ENCODE measurements at regions of chr10 and their contacts with region 1.

Region 1: GRCh38 chr10:122565728-122566206 is 5.2 kb downstream of the DMBT1 start:
- DNase-seq: peak; percentile 82
- ATAC-seq: no peak
- H3K4me3 Mint-ChIP-seq: no peak overlapping the region
- H3K27ac Mint-ChIP-seq: no peak overlapping the region
- H3K4me1 Mint-ChIP-seq: peaks cover 5% of the 10 kb centered on the region
- H3K27me3 Mint-ChIP-seq: peaks cover 41% of the 10 kb centered on the region

Region 2: GRCh38 chr10:122342293-122343134 is 223.3 kb before region 1 on chr10:
- CTCF ChIA-PET with region 1: interaction called, 23 read pairs
- POLR2A ChIA-PET with region 1: no interaction called
- DNase-seq: peak; percentile 69
- ATAC-seq: peak; percentile 64
- H3K4me3 Mint-ChIP-seq: no peak overlapping the region
- H3K27ac Mint-ChIP-seq: no peak overlapping the region
- H3K4me1 Mint-ChIP-seq: peaks cover 7% of the 10 kb centered on the region
- H3K27me3 Mint-ChIP-seq: no peaks in the 10 kb centered on the region

Region 3: GRCh38 chr10:122495406-122496340 is 70.1 kb before region 1 on chr10:
- CTCF ChIA-PET with region 1: interaction called, 15 read pairs
- POLR2A ChIA-PET with region 1: interaction called, 3 read pairs
- DNase-seq: peak; percentile 33
- ATAC-seq: no peak
- H3K4me3 Mint-ChIP-seq: no peak overlapping the region
- H3K27ac Mint-ChIP-seq: no peak overlapping the region
- H3K4me1 Mint-ChIP-seq: peaks cover 21% of the 10 kb centered on the region
- H3K27me3 Mint-ChIP-seq: peaks cover 27% of the 10 kb centered on the region

Region 4: DNA sequence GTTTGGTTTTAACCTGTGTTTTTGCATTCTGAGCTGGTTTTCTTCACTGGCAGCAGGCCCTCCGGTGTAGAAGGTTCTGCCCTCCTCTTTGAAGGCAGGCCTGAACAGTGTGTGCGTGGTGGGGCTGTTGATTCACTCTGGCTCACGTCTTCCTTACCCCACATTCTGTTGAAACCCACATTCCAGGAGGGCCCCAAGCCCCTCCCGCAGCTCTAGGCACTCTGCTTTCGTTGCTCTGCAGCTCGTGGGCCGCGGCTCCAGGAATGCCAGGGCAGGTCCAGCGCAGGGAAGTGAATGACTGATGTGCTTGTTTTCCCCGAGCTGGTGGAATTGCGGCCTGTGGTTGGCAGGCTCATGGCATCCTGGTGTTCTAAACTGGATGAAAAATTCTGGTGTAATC is 55.4 kb before region 1 on chr10:
- CTCF ChIA-PET with region 1: interaction called, 45 read pairs
- POLR2A ChIA-PET with region 1: interaction called, 5 read pairs
- DNase-seq: no peak
- ATAC-seq: no peak
- H3K4me3 Mint-ChIP-seq: no peak overlapping the region
- H3K27ac Mint-ChIP-seq: no peak overlapping the region
- H3K4me1 Mint-ChIP-seq: peaks cover 18% of the 10 kb centered on the region
- H3K27me3 Mint-ChIP-seq: peaks cover 9% of the 10 kb centered on the region

Region 5: DNA sequence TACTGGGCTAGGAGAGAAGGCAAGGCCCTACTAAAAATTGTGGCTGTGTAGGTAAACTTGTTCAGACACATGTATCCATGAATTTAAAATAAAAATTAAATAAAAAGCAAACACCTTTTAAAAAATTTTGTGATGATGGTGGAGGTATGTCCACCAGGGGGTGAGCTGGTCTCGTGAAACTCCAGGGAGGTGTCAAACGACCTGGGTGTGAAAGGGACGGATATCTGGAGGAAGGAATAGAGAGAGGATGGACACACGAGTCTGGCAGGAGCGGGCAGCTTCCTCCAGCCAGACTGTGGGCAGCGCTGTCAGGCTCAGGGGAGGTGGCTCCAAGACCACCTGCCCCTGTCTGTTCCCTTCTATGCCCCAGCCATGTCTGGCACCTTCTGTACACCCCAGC is 40.0 kb before region 1 on chr10:
- CTCF ChIA-PET with region 1: interaction called, 71 read pairs
- POLR2A ChIA-PET with region 1: no interaction called
- DNase-seq: no peak
- ATAC-seq: no peak
- H3K4me3 Mint-ChIP-seq: no peak overlapping the region
- H3K27ac Mint-ChIP-seq: no peak overlapping the region
- H3K4me1 Mint-ChIP-seq: peaks cover 10% of the 10 kb centered on the region
- H3K27me3 Mint-ChIP-seq: peaks cover 28% of the 10 kb centered on the region

Region 6: DNA sequence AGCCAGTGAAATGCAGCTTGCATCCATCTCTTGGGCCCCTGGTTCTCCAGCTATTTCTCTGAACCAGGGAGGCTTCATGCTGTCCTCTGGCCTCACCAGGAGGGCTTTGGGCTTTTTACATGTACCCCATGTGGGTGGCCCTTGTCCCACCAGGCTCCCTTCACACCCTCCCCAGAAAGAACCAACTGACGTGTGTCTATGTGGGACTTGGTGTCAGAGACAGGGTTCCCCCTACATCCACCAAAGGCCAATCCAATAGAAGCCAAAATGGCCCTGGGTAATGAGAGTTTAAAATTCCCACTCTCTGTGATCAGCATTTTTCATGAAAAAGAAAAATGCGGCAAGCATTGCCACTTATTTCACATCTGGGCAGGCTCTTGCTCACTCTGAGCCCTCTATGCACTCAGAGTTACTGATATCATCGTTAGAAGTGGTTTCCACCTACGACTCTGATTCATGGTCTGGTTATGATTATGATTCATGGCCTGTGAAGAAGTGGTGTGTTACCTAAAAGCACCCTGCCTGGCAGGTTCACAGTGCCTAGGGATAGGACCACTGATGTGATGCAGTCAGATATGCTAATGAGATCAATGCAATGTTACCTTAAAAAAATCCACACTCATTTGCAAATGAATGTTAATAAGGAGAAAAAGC is 722.0 kb after region 1 on chr10:
- CTCF ChIA-PET with region 1: no interaction called
- POLR2A ChIA-PET with region 1: no interaction called
- DNase-seq: peak; percentile 21
- ATAC-seq: peak; percentile 42
- H3K4me3 Mint-ChIP-seq: no peak overlapping the region
- H3K27ac Mint-ChIP-seq: no peak overlapping the region
- H3K4me1 Mint-ChIP-seq: peaks cover 2% of the 10 kb centered on the region
- H3K27me3 Mint-ChIP-seq: no peaks in the 10 kb centered on the region

Measured in activated CD8-positive, alpha-beta T cell treated with anti-CD3 and anti-CD28 coated beads, Interleukin-2, amount 10 ng/mL, durations not matched to agents 7 days and 5 days (primary cell).